Calu3 (cell line): ENCODE measurements at regions of chr6 and their contacts with region 1.

Region 1: DNA sequence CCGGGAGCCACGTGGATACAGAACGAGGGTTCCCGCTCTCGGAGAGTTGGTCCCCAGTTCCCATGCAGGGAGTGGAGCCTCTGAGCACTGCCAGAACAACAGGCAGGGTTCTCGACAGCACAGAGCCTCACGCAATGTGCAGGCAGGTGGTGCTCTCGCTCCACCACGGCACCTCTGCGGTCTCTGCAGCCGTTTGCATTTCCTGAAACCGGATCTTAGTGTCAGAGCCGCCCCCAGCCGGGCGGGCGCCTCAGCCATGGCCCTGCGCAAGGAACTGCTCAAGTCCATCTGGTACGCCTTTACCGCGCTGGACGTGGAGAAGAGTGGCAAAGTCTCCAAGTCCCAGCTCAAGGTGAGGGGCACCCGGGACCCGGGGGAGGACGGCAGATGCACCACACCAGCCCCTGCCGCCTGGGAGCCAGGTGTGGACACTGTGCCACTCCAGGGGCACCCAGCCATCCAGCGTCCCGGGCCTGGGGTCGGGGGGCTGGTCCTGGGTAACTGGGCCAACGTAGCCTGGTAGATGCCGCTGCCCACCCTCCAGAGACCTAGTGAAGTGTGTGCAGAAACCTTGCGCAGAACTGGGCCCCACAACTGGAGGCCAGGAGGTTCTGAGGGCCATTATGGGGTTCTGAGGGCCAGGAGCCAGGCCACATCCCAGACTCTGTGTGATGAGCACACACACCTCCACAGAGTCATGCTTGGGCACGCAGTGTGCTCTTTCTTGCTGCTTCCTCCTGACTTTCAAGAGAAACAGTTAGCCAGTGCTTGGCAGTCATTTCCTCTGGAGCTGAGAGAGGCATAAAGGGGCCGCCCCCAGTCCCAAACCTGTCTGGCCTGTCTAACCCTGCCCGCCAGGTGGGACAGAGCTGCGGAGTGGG is at the start of gene DEF6:
- DNase-seq: peak; percentile 93
- H3K4me3 Mint-ChIP-seq: peak within 1 kb of the TSS; percentile 62
- H3K27ac Mint-ChIP-seq: no peak within 1 kb of the TSS
- H3K4me1 Mint-ChIP-seq: peaks cover 15% of the 10 kb centered on the region
- H3K27me3 Mint-ChIP-seq: no peaks in the 10 kb centered on the region
- CTCF ChIP-seq: peak; percentile 82
- total RNA-seq, gene DEF6: 15.4 and 18.5 TPM in 2 replicates

Region 2: DNA sequence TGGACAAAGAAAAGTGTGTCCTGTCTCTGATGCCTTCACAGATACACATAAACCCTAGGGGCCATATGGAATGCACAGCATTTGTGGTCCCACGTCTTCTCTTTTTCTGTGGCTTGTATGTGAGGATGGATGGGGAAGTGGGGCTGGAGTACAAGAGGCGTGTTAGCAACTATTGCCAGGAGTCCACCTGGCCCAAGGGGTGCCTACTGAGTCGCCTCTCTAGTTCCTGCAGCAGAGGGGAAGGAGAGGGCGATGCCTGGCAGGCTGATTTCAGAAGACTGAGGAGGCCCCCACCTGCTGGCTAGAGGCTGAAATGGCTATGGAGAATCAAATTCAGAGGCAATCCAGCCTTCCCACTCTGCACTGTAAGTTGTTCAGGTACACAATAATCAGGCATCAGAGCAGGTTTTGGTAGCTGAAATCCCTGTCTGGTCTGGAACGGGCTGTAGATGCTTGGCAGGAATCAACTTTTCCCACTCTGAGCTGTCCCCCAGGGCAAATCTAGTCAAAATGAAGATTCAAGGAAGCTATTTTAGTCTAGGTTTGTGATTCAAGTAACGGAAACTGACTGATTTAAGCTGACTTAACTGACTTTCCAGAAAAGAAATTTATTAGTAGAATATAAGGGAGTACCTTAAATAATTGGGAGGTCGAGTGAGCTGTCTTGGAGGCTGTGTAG is 29.6 kb after region 1 on chr6:
- CTCF ChIA-PET with region 1: interaction called, 5 read pairs
- intact Hi-C with region 1: loop called (anchors 1 kb)
- DNase-seq: peak; percentile 87
- H3K4me3 Mint-ChIP-seq: no peak overlapping the region
- H3K27ac Mint-ChIP-seq: no peak overlapping the region
- H3K4me1 Mint-ChIP-seq: peaks cover 8% of the 10 kb centered on the region
- H3K27me3 Mint-ChIP-seq: peaks cover 1% of the 10 kb centered on the region
- CTCF ChIP-seq: peak; percentile 81

Region 3: DNA sequence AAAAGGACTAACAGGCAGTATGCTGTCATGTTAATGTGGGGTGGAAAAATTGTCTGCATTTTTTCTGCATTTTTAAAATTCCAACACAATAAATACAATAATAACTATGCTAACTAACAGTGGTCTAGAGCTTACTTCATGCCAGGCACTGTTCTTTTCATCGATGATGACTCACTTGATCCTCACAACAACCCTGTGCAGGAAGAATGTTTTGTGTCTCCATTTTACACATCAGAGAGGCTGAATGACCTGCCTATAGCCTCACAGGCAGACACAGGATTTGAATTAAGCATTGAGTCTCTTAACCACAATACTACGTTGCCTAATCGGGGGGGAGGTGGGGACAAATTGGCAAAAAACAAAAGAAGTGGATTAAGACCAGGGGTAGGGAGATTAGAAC is 127.4 kb after region 1 on chr6:
- CTCF ChIA-PET with region 1: no interaction called
- intact Hi-C with region 1: no loop called
- DNase-seq: no peak
- H3K4me3 Mint-ChIP-seq: no peak overlapping the region
- H3K27ac Mint-ChIP-seq: no peak overlapping the region
- H3K4me1 Mint-ChIP-seq: no peaks in the 10 kb centered on the region
- H3K27me3 Mint-ChIP-seq: no peaks in the 10 kb centered on the region
- CTCF ChIP-seq: no peak

Region 4: DNA sequence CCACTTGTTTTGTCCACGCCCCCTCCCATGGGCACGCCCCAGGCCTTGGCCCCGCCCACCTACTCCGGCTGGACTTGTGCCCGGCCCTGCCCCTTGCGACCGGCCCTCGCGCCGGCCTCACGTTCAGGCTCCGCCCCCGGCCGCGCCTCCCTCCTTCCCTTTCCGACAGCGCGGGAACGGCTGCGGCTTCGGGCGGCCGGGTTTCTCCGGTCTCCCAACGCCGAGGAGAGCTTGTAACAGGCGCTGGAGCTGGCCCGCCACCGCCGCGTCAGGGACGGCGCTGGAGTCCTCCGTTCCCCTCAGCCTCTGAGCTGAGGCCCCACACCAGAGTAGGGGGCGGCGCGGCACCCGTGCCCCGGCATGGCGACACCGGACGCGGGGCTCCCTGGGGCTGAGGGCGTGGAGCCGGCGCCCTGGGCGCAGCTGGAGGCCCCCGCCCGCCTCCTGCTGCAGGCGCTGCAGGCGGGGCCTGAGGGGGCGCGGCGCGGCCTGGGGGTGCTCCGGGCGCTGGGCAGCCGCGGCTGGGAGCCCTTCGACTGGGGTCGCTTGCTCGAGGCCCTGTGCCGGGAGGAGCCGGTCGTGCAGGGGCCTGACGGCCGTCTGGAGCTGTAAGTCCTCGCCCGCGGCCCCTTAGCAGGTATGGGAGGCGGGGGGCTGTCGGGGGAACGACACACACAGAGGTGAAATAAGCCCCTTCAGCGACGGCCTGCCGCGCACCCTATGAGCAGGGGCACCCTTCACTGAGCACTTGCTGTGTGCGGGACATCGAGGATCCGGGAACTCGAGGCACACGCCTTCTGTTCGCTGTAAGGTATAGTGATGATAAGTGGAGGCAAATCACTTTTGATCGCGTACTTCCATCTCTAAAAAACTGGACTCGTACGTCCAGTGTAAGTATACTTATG is 154.6 kb after region 1 on chr6 and contains the start of gene FANCE:
- CTCF ChIA-PET with region 1: interaction called, 13 read pairs
- intact Hi-C with region 1: loop called (anchors 1 kb)
- DNase-seq: peak; percentile 99
- H3K4me3 Mint-ChIP-seq: peak within 1 kb of the TSS; percentile 79
- H3K27ac Mint-ChIP-seq: no peak within 1 kb of the TSS
- H3K4me1 Mint-ChIP-seq: peaks cover 26% of the 10 kb centered on the region
- H3K27me3 Mint-ChIP-seq: peaks cover 27% of the 10 kb centered on the region
- CTCF ChIP-seq: no peak
- total RNA-seq, gene FANCE: 10.4 and 10.9 TPM in 2 replicates

Region 5: DNA sequence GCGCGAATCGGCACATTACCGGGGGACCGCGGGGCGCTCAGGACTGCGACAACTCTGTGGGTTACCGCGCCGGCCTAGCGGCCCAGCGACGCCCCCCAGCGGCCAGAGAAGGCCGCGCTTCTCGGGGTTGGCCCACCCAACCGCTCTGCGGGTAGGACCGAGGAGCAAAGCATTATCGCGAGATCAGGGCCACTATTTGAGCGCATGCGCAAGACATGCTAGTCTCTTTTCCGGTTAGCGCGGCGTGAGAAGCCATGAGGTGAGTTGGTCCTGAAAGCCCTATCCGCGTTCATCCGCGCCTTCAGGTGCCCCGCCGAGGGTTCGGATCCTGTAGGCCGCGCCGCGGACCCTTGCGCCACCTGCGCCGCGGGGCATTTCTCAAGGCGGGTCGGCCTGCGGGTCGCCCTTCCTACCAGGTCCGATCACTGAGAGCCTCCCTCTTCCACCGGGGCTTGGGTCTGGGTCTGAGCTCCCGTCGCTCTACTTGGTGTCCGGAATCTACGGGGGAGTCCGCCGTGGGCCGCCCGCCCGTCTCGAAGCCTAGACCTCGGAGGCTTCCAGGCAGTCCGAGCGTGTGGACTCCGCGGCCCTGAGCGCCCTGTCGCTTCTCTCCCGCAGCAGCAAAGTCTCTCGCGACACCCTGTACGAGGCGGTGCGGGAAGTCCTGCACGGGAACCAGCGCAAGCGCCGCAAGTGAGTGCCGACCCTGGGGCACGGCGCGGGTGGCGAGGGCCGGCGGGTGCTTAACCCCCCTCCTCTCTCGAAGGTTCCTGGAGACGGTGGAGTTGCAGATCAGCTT is 170.5 kb after region 1 on chr6 and contains the start of gene RPL10A:
- CTCF ChIA-PET with region 1: interaction called, 7 read pairs
- intact Hi-C with region 1: loop called (anchors 1 kb)
- DNase-seq: peak; percentile 95
- H3K4me3 Mint-ChIP-seq: peak within 1 kb of the TSS; percentile 98
- H3K27ac Mint-ChIP-seq: peak within 1 kb of the TSS; percentile 100
- H3K4me1 Mint-ChIP-seq: peaks cover 33% of the 10 kb centered on the region
- H3K27me3 Mint-ChIP-seq: no peaks in the 10 kb centered on the region
- CTCF ChIP-seq: peak; percentile 96
- total RNA-seq, gene RPL10A: 789 and 828 TPM in 2 replicates

Region 6: GRCh38 chr6:35552285-35552917 is 254.6 kb after region 1 on chr6:
- CTCF ChIA-PET with region 1: no interaction called
- intact Hi-C with region 1: loop called (anchors 10 kb)
- DNase-seq: peak; percentile 64
- H3K4me3 Mint-ChIP-seq: no peak overlapping the region
- H3K27ac Mint-ChIP-seq: no peak overlapping the region
- H3K4me1 Mint-ChIP-seq: no peaks in the 10 kb centered on the region
- H3K27me3 Mint-ChIP-seq: peaks cover 20% of the 10 kb centered on the region
- CTCF ChIP-seq: peak; percentile 89